ENCODE measurements at regions of chr20 and their contacts with region 1.

Region 1: DNA sequence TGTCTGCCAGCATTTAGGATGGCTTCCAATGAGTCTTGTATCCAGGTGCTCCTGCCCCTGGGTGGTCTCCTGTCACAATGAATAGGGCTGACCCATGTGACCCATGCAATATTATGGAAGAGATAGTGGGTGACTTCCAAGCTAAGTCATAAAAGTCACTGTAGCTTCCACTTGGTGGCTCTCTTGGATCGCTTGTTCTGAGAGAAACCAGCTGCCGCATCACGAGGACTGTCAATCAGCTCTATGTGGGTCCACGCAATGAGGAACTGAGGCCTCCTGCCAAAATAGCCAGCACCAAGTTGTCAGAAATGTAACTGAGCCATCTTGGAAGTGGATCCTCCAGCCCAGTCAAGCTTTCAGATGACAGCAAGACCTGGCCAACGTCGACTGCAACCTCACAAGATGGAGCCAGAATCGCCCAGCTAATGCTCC is 14.9 kb upstream of the MATN4 start:
- DNase-seq: no peak
- H3K4me3 ChIP-seq: no peak overlapping the region
- CTCF ChIP-seq: no peak

Region 2: GRCh38 chr20:44966030-44966961 is 356.7 kb before region 1 on chr20 and contains the start of gene STK4:
- CTCF ChIA-PET with region 1: no interaction called
- POLR2A ChIA-PET with region 1: no interaction called
- DNase-seq: no peak
- H3K4me3 ChIP-seq: peak within 1 kb of the TSS; percentile 96
- CTCF ChIP-seq: peak; percentile 71

Region 3: DNA sequence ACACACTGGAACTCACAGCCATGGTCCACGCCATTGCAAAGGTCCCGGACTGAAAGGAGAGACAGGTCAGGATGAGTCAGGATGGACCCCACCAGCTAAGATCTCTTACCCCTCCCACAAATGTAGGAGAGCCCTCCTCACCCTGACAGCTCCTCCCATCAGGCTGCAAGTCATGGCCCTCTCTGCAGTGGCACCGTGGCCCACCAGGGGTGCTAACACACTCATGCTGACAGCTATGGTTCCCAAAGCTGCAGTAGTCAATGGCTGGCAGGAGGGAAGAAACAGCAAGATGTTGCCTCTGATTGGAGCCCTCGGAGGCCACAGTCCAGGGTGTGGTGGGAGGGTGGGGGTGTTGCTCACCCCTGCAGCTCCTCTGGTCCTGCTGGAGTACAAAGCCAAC is 22.0 kb before region 1 on chr20:
- CTCF ChIA-PET with region 1: interaction called, 13 read pairs
- POLR2A ChIA-PET with region 1: no interaction called
- DNase-seq: no peak
- H3K4me3 ChIP-seq: no peak overlapping the region
- CTCF ChIP-seq: peak; percentile 58

Region 4: GRCh38 chr20:45341939-45342859 is 19.2 kb after region 1 on chr20:
- CTCF ChIA-PET with region 1: interaction called, 74 read pairs
- POLR2A ChIA-PET with region 1: interaction called, 3 read pairs
- DNase-seq: no peak
- H3K4me3 ChIP-seq: peak overlapping the region; percentile 35
- CTCF ChIP-seq: no peak

Region 5: GRCh38 chr20:45355209-45356084 is 32.5 kb after region 1 on chr20:
- CTCF ChIA-PET with region 1: interaction called, 137 read pairs
- POLR2A ChIA-PET with region 1: no interaction called
- DNase-seq: no peak
- H3K4me3 ChIP-seq: no peak overlapping the region
- CTCF ChIP-seq: no peak

Region 6: GRCh38 chr20:45373353-45374100 is 50.6 kb after region 1 on chr20:
- CTCF ChIA-PET with region 1: interaction called, 39 read pairs
- POLR2A ChIA-PET with region 1: interaction called, 3 read pairs
- DNase-seq: no peak
- H3K4me3 ChIP-seq: peak overlapping the region; percentile 55
- CTCF ChIP-seq: peak; percentile 95

Region 7: DNA sequence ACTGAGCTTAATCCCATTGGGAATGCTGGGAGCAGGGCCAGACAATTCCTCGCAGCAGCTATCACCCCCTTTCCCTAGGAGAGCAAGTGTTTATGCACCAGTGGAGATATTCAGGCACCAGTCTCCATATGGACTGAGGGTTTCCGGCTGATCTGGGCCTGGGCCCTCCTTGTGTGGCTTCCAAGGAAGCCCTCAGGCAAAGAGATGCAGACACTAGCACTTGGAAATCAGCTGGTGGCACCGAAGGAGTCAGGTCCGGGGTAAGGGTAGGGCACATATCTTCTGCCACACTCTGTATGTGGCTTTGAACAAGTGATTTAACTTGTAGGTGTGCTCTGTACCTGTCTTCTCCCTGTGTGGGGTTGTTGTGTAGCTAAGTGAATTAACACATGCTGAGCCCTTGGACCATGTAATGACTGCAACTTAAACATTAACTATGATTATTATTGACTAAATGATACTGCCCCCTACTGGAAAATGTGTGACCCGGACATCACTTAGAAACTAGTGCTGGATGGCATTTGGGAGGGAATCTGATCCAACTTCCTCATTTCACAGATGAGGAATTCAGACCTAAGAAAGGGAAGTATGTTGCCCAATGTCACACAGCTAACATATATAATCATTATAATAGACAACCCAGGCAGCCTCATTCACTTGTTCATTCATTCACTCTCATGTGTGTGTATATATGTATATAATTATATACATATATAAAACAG is 127.3 kb after region 1 on chr20:
- CTCF ChIA-PET with region 1: interaction called, 67 read pairs
- POLR2A ChIA-PET with region 1: no interaction called
- DNase-seq: no peak
- H3K4me3 ChIP-seq: no peak overlapping the region
- CTCF ChIP-seq: peak; percentile 49